AG04450 (cell line): ENCODE measurements at regions of chr14 and their contacts with region 1.

Region 1: DNA sequence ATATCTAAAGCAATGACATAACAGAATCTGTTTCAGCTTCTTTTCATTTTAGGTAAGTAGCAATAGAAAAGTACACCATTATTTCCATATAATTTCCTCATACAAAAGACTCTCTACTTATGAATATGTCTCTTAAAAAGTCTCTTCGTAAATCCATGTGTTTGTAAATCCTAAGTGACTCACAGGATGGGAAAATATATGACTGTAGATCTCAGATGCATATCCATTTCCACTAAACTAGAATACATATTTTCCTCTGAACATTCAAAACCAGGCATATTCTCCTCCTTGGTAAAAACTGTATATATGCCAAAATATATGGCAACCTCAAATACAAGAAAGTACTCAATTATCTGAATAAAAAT is 93.6 kb downstream of the TXNDC16 start:
- DNase-seq: no peak
- H3K4me3 ChIP-seq: no peak overlapping the region; the same call in 1 of the 2 replicates
- H3K27ac ChIP-seq: no peak overlapping the region
- H3K27me3 ChIP-seq: no peaks in the 10 kb centered on the region
- CTCF ChIP-seq: no peak

Region 2: GRCh38 chr14:52279405-52279804 is 179.3 kb before region 1 on chr14:
- CTCF ChIA-PET with region 1: no interaction called
- POLR2A ChIA-PET with region 1: no interaction called
- DNase-seq: no peak
- H3K4me3 ChIP-seq: no peak overlapping the region
- H3K27ac ChIP-seq: no peak overlapping the region
- H3K27me3 ChIP-seq: peaks cover 2% of the 10 kb centered on the region
- CTCF ChIP-seq: no peak

Region 3: DNA sequence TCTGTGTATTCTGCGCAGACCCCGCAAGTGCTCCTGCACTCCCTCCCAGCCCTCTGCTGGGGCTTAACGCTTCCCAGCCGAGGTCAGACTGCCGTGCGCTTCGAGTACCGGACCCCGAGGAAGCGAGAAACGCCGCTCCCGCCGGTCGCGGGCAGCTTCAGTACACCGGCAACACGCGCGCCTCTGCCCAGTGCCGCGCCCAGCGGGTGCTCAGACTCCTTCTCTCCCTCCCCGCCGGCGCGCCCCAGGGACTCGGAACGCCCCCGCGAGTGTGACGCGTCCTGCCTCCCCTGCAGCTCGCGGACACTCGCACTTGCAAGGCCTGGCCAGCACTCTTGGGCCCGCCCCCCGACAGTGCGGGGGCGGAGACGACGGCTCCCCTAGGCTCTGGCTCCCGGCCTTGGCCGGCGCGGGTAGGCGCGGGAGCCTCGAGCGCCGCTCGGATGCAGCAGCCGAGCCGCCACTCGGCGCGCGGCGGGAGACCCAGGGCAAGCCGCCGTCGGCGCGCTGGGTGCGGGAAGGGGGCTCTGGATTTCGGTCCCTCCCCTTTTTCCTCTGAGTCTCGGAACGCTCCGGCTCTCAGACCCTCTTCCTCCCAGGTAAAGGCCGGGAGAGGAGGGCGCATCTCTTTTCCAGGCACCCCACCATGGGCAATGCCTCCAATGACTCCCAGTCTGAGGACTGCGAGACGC is 144.7 kb before region 1 on chr14 and contains the start of gene PTGER2:
- CTCF ChIA-PET with region 1: interaction called, 3 read pairs
- POLR2A ChIA-PET with region 1: interaction called, 13 read pairs
- DNase-seq: peak; percentile 92
- H3K4me3 ChIP-seq: peak within 1 kb of the TSS; percentile 67
- H3K27ac ChIP-seq: peak within 1 kb of the TSS; percentile 70
- H3K27me3 ChIP-seq: no peaks in the 10 kb centered on the region
- CTCF ChIP-seq: no peak
- polyA plus RNA-seq, gene PTGER2: 56.9 and 70.7 TPM in 2 replicates